Calu3 (cell line): ENCODE measurements at regions of chr1 and their contacts with region 1.

Region 1: DNA sequence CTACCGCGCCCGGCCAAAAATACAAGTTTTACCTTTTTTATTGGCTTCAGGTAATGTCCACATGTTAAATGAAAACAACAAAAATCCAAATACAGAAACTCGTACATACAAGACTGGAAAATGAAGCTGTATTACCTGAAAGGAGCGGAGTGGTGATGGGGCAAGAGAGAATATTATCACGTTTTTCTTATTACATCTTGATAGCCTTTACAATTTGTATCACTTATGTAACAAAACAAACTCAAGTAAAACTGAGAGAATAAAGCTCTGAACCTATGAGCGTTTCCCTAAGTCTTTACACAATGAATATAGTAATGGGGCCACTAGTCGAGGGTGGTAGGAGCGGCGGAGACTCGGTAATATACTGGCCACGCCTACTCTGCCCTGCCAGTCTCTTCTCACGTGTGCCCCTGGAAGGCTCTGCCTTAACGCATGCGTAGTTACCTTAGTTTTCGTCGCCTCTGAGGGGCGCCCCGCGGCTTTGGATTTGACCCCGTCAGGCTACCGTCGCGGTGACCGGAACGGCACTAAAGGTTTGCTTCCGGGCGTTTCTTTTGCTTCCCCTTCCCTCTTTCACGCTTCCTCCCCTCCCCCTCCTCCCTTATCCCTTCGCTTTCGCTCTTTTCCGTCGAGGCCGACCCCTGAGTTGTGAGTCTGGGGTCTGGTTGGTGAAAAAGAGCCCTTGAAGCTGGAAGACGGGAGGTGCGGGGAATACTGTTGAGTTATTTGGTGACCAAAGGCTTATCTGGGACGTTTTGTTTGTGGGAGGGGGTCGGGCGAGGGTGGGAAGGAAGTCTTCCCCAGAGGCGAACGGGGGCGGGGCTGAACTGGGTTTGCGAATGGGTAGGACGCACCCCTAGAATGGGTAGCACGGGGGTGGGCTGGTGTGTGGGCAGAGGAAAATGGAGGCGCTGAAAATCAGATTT is at the start of gene SETDB1:
- DNase-seq: peak; percentile 98
- H3K4me3 Mint-ChIP-seq: peak within 1 kb of the TSS; percentile 90
- H3K27ac Mint-ChIP-seq: peak within 1 kb of the TSS; percentile 90
- H3K4me1 Mint-ChIP-seq: peaks cover 10% of the 10 kb centered on the region
- H3K27me3 Mint-ChIP-seq: no peaks in the 10 kb centered on the region
- CTCF ChIP-seq: no peak
- total RNA-seq, gene SETDB1: 64.9 and 70.6 TPM in 2 replicates

Region 2: GRCh38 chr1:150477733-150478132 is 448.3 kb before region 1 on chr1:
- CTCF ChIA-PET with region 1: no interaction called
- intact Hi-C with region 1: loop called (anchors 10 kb)
- DNase-seq: peak; percentile 20
- H3K4me3 Mint-ChIP-seq: no peak overlapping the region
- H3K27ac Mint-ChIP-seq: peak overlapping the region; percentile 62
- H3K4me1 Mint-ChIP-seq: peaks cover 27% of the 10 kb centered on the region
- H3K27me3 Mint-ChIP-seq: no peaks in the 10 kb centered on the region
- CTCF ChIP-seq: no peak

Region 3: DNA sequence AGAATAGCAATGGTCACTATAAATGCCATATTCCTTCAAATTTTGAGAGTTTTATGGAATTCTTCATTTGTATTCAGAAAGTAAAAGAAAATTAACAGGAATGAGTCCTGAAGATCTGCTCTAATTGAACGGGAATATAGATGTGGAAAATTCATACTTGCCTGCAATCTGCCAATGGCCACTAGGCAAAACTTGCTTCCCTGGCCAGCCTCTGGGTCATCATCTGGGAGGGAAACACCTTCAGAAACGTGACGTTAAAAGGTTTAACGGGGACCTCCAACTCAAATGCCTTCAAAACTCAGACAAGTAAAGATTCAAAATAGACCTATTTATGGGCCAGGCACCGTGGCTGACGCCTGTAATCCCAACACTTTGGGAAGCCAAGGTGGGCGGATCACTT is 96.3 kb before region 1 on chr1:
- CTCF ChIA-PET with region 1: no interaction called
- intact Hi-C with region 1: loop called (anchors 5 kb)
- DNase-seq: no peak
- H3K4me3 Mint-ChIP-seq: no peak overlapping the region
- H3K27ac Mint-ChIP-seq: no peak overlapping the region
- H3K4me1 Mint-ChIP-seq: no peaks in the 10 kb centered on the region
- H3K27me3 Mint-ChIP-seq: no peaks in the 10 kb centered on the region
- CTCF ChIP-seq: peak; percentile 18

Region 4: DNA sequence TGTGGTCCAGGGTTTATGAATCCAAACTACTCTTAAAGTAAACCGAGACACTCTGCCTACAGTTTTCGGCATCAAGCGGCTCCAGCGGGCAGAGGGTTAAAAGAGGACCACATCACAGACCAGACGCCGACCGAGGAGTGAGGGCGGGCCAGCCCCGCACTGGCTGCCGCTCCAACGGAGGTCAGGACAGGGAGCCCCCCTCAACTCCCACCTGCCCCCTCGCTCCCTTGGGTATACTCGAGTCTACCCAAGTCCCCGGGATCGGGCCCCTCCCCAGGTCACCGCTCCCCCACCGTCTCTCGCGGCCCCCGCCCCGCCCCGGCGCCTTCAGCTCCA is 50.0 kb before region 1 on chr1:
- CTCF ChIA-PET with region 1: interaction called, 4 read pairs
- intact Hi-C with region 1: loop called (anchors 5 kb)
- DNase-seq: peak; percentile 63
- H3K4me3 Mint-ChIP-seq: peak overlapping the region; percentile 85
- H3K27ac Mint-ChIP-seq: peak overlapping the region; percentile 80
- H3K4me1 Mint-ChIP-seq: peaks cover 11% of the 10 kb centered on the region
- H3K27me3 Mint-ChIP-seq: no peaks in the 10 kb centered on the region
- CTCF ChIP-seq: no peak